ENCODE measurements at regions of chr9 and their contacts with region 1.

Region 1: DNA sequence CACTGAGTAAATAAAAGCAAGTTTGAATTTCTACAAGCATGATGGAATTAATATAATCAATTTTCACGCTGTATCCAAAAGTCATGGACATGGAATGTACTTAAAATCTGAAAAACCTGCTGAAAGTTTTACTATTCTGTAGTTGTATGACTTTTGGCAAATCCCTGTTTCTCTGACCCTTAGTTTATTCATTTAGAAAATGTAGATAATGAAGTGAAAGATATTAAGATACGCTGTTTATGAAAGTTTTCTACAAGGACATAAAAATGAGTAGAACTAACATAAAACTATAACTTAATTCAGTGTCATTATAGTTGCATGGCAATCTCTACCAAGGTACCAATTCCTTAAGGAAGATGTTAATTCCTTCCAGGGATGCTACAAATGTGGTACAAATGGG is 363.2 kb upstream of the MPDZ start:
- DNase-seq: no peak
- H3K4me3 ChIP-seq: no peak overlapping the region
- H3K4me3 Mint-ChIP-seq: no peak overlapping the region
- H3K27ac ChIP-seq: no peak overlapping the region
- H3K27ac Mint-ChIP-seq: no peak overlapping the region
- H3K4me1 ChIP-seq: no peaks in the 10 kb centered on the region
- H3K4me1 Mint-ChIP-seq: no peaks in the 10 kb centered on the region
- H3K27me3 ChIP-seq: no peaks in the 10 kb centered on the region
- H3K27me3 Mint-ChIP-seq: no peaks in the 10 kb centered on the region

Region 2: DNA sequence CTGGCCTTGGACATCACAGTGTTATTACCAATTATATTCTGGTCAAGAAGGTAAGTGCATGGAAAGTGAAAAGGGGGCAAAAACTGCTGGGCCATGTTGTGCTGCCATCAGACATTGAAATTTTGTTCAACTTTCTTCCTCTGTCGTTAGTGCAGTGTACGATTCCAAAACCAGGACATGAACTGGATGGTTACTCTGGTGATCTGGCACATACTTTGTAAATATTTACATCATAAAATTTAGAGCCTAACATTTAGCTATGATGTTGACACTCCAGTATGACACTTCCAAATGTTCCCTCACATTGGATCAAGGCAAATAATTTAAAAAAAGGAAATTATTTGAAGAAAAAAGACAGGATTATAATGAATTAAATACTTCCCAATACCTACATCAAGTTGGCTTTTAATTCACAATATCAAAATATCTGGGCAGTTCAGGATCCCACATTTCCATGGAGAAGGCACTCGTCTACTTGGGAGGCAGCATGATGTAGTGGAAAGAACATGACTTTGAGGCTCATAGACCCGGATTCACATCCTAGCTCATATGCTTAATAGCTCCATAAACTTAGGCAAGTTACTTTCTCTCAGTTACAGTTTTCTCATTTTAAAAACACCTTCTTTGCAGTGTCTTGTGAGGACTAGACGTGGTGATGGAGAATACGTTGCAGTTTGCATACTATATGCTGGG is 20.6 kb before region 1 on chr9:
- CTCF ChIA-PET with region 1: no interaction called
- POLR2A ChIA-PET with region 1: no interaction called
- intact Hi-C with region 1: loop called (anchors 2 kb)
- DNase-seq: no peak
- H3K4me3 ChIP-seq: no peak overlapping the region
- H3K4me3 Mint-ChIP-seq: no peak overlapping the region
- H3K27ac ChIP-seq: no peak overlapping the region
- H3K27ac Mint-ChIP-seq: no peak overlapping the region
- H3K4me1 ChIP-seq: no peaks in the 10 kb centered on the region
- H3K4me1 Mint-ChIP-seq: no peaks in the 10 kb centered on the region
- H3K27me3 ChIP-seq: no peaks in the 10 kb centered on the region
- H3K27me3 Mint-ChIP-seq: peaks cover 0 to 1% of the 10 kb centered on the region in 2 donors